ENCODE measurements at regions of chr17 and their contacts with region 1.

Region 1: GRCh38 chr17:77331301-77331864 is 190.6 kb downstream of the SEC14L1 start:
- DNase-seq: peak; percentile 88 to 97 (median 95)
- ATAC-seq: peak; percentile 80 to 89
- H3K4me3 Mint-ChIP-seq: peak overlapping the region; percentile 71 to 90 (median 84)
- H3K27ac Mint-ChIP-seq: peak overlapping the region; percentile 84 to 97 (median 91)
- H3K4me1 Mint-ChIP-seq: peaks cover 23 to 52% (median 47%) of the 10 kb centered on the region in 4 donors
- H3K27me3 Mint-ChIP-seq: peaks cover 0 to 2% (median 0%) of the 10 kb centered on the region in 5 donors

Region 2: GRCh38 chr17:77382966-77383612 is 51.7 kb after region 1 on chr17:
- POLR2A ChIA-PET with region 1: interaction called, 70 read pairs
- DNase-seq: no peak
- ATAC-seq: peak; percentile 7 to 9
- H3K4me3 Mint-ChIP-seq: peak overlapping the region in 9 of 10 donors; percentile 75 to 90 (median 82)
- H3K27ac Mint-ChIP-seq: peak overlapping the region; percentile 75 to 94 (median 90)
- H3K4me1 Mint-ChIP-seq: peaks cover 49 to 94% (median 88%) of the 10 kb centered on the region in 4 donors
- H3K27me3 Mint-ChIP-seq: no peaks in the 10 kb centered on the region

Region 3: GRCh38 chr17:77404812-77405581 is 73.6 kb after region 1 on chr17:
- POLR2A ChIA-PET with region 1: interaction called, 55 read pairs
- DNase-seq: peak; percentile 48 to 88 (median 81)
- ATAC-seq: peak; percentile 67 to 77
- H3K4me3 Mint-ChIP-seq: peak overlapping the region; percentile 91 to 99 (median 97)
- H3K27ac Mint-ChIP-seq: peak overlapping the region; percentile 93 to 100 (median 98)
- H3K4me1 Mint-ChIP-seq: peaks cover 67 to 99% (median 96%) of the 10 kb centered on the region in 4 donors
- H3K27me3 Mint-ChIP-seq: no peaks in the 10 kb centered on the region

Region 4: GRCh38 chr17:77429919-77430752 is 98.8 kb after region 1 on chr17:
- POLR2A ChIA-PET with region 1: interaction called, 164 read pairs
- DNase-seq: peak; percentile 71 to 92 (median 82)
- ATAC-seq: peak; percentile 18 to 37
- H3K4me3 Mint-ChIP-seq: peak overlapping the region in 9 of 10 donors; percentile 16 to 99 (median 86)
- H3K27ac Mint-ChIP-seq: peak overlapping the region; percentile 80 to 100 (median 97)
- H3K4me1 Mint-ChIP-seq: peaks cover 45 to 94% (median 87%) of the 10 kb centered on the region in 4 donors
- H3K27me3 Mint-ChIP-seq: no peaks in the 10 kb centered on the region

Region 5: GRCh38 chr17:77451245-77451893 is 120.0 kb after region 1 on chr17:
- POLR2A ChIA-PET with region 1: interaction called, 48 read pairs
- DNase-seq: peak in 9 of 10 donors; percentile 60 to 81 (median 68)
- ATAC-seq: peak; percentile 50 to 62
- H3K4me3 Mint-ChIP-seq: peak overlapping the region; percentile 91 to 98 (median 96)
- H3K27ac Mint-ChIP-seq: peak overlapping the region; percentile 92 to 99 (median 99)
- H3K4me1 Mint-ChIP-seq: peaks cover 28 to 67% (median 54%) of the 10 kb centered on the region in 4 donors
- H3K27me3 Mint-ChIP-seq: no peaks in the 10 kb centered on the region

Region 6: DNA sequence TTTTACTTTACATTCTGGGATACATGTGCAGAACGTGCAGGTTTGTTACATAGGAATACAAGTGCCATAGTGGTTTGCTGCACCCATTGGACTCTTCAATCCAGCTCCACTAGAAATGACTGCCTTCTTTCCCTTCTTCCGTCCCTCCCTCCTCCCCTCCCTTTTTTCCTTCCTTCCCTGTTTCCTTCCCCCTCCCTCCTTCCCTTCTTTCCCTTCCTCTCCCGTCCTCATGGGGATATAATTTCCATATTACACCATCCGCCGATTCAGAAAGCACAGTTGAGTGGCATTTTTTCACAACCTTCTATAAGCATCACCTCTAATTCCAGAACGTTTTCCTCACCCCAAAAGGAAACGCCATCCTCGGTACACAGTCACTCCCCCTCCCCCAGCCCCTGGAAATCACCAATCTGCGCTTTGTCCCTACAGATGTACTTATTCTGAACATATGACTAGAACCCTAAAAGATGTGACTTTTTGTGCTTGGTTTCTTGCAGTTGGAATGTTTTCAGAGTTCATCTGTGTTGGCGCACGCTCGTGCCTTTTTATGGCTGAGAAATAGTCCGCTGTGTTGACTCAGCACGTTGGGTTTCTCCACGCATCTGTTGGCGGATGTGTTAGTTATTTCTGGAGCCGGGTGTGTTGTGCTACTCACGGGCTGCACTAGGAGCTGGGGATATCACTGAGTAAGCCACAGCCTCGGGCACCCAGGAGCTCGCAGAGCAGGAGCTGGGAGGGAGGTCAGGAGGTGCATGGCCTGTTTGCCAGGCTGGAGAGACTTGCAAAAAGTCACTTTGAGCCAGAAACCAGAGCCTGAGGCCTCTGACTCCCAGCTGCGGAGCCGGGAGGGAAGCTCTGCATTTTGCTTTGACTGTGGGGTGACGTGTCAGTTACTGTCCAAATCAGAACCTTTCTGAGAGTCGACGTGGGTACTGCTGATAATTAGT is 145.8 kb after region 1 on chr17:
- POLR2A ChIA-PET with region 1: interaction called, 12 read pairs
- DNase-seq: no peak
- ATAC-seq: no peak
- H3K4me3 Mint-ChIP-seq: peak overlapping the region; percentile 31 to 81 (median 73)
- H3K27ac Mint-ChIP-seq: peak overlapping the region; percentile 87 to 98 (median 94)
- H3K4me1 Mint-ChIP-seq: peaks cover 57 to 87% (median 85%) of the 10 kb centered on the region in 4 donors
- H3K27me3 Mint-ChIP-seq: no peaks in the 10 kb centered on the region

Measured in naive thymus-derived CD8-positive, alpha-beta T cell (primary cell).